ENCODE measurements at regions of chr9 and their contacts with region 1.

Region 1: GRCh38 chr9:110880189-110880588 is 158.1 kb downstream of the LPAR1 start:
- DNase-seq: peak; percentile 72
- H3K4me3 ChIP-seq: no peak overlapping the region
- H3K27me3 ChIP-seq: no peaks in the 10 kb centered on the region
- CTCF ChIP-seq: peak; percentile 8; the same call in 1 of the 2 replicates

Region 2: DNA sequence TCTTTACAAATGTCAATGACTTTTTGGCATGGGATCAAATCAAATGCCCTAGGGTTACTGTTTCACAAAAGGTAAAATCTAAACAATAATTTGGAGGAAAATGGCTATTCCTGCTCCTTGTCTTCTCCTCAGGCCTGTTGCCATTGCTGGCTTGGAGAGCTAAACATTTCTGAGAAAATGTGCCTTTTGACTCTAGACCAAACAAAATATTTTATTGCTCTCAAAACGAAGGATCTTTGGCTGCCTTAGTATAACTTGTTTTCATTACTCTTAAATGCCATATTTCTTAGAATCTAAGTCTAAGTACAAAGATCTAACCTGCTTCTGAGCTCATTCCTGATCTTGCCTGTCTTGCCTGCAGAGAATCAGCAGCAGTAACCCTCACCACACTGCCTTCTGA is 95.0 kb before region 1 on chr9:
- CTCF ChIA-PET with region 1: no interaction called
- POLR2A ChIA-PET with region 1: no interaction called
- DNase-seq: no peak
- H3K4me3 ChIP-seq: no peak overlapping the region
- H3K27me3 ChIP-seq: no peaks in the 10 kb centered on the region
- CTCF ChIP-seq: no peak

Region 3: GRCh38 chr9:111108946-111109345 is 228.8 kb after region 1 on chr9:
- CTCF ChIA-PET with region 1: no interaction called
- POLR2A ChIA-PET with region 1: interaction called, 14 read pairs
- DNase-seq: peak; percentile 83
- H3K4me3 ChIP-seq: no peak overlapping the region
- H3K27me3 ChIP-seq: no peaks in the 10 kb centered on the region
- CTCF ChIP-seq: no peak